ENCODE measurements at regions of chr17 and their contacts with region 1.

Region 1: DNA sequence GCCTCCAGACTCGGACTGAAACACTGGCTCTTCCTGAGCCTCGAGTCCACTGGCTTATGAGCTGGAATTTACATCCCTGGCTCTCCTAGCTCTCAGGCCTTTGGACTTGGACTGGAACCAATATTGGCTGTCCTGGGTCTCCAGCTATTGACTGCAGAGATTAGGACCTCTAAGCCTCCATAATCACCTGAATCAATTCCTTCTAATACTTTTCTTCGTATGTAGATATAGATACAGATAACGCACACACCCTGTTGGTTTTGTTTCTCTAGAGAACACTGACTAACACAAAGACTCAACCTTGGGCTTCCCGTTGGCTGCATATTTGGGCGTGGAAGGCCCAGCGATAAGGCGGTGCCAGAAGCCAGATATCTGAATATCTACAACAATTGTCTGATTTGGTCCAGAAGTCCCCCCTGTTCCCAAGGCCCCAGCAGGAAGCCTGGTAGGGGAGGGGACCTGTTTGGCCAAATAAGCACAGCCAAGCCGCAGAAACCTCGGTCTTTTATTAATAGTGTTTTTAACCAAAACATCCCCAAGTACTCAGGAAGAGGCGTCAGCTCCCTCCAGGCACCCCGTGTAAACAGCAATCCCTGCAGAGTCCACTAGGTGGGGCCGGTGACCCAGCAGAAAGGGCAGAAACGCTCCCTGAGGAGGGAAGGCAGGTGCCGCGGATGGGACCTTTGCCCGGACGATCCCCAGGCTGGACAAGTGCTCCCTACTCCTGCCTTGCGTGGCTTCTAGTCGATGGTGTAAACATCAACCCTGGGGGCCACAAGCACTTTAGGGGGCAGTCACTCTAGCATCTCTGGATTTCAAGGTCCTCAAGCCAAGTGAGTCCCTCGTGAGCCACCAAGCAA is 57.0 kb downstream of the ABR start:
- DNase-seq: peak; percentile 90
- ATAC-seq: peak; percentile 87

Region 2: GRCh38 chr17:1147661-1148060 is 24.9 kb after region 1 on chr17:
- intact Hi-C with region 1: loop called (anchors 2 kb)
- DNase-seq: no peak
- ATAC-seq: peak; percentile 62

Region 3: GRCh38 chr17:1186923-1187771 is 64.4 kb after region 1 on chr17:
- intact Hi-C with region 1: loop called (anchors 1 kb)
- DNase-seq: peak; percentile 92
- ATAC-seq: peak; percentile 93

Region 4: DNA sequence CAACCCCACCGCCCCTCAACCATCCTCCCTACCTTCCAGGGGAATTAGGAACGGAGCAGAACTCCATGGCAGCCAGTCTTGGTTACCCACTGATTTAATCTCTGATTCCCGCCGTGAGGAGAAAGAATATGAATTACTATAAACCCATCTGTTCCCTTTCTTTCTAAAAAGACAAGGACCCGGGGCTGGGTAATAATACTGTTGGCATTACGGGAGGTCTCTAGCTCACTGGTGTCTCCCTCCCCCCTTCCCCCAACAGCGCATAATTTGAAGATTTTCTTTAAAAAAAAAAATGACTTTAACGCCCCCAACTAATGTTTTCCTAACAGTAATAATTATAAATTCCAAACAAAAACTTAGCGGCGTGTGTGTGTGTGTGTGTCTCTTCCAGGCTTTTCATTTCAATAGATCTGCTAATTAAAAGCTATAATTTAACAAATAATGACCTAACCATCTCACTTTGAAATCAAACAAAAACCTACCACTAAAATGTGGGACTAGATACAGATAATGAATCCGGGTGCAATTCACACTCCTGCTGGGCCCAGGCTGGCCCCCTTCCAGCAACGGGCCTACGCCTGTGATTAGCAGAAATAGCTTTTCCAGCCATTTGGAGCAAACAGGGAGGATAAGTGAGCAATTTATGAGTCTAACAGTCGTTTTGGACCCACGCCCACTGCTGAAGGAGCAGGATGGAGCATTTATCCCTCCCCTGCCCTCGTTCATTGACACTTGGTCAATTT is 129.3 kb after region 1 on chr17:
- intact Hi-C with region 1: loop called (anchors 10 kb)
- DNase-seq: peak; percentile 55
- ATAC-seq: peak; percentile 11

Region 5: GRCh38 chr17:1275962-1276736 is 153.4 kb after region 1 on chr17:
- intact Hi-C with region 1: no loop called
- DNase-seq: peak; percentile 81
- ATAC-seq: peak; percentile 78